ENCODE measurements at regions of chr5 and their contacts with region 1.

Region 1: DNA sequence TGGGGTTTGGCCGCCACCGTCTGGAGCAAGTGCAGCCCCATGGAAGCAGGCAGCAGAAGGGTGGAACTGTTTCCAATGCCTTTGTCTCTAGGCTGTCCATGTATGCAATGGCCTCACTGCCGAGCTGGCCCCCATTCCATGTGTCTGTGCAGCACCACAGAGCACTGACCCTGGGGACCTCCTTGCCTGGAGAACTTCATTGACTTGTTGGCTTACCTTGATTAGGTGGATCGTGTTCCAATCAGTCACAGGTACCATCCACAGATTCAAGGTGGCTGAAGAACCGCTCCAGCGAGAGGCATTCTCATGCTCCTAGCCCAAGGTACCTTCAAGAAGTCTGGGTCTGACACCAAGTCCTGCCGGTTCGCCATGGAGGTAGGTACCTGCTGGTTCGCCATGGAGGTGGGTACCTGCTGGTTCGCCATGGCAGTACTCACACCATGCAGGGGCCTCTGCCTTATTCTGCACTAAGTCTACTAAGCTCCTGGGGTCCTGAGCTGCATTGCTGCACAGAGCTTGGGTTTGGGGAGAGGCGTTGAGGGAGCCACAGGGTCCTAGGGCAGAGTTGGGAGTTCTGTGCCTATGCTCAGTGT is 358.3 kb upstream of the IRX1 start:
- DNase-seq: no peak
- ATAC-seq: no peak
- H3K4me3 ChIP-seq: no peak overlapping the region
- H3K27ac ChIP-seq: no peak overlapping the region
- H3K4me1 ChIP-seq: no peaks in the 10 kb centered on the region
- H3K27me3 ChIP-seq: no peaks in the 10 kb centered on the region
- CTCF ChIP-seq: no peak

Region 2: GRCh38 chr5:2399804-2400203 is 837.6 kb before region 1 on chr5:
- intact Hi-C with region 1: loop called in 1 of 10 experiments (anchors 5 kb)
- DNase-seq: no peak
- ATAC-seq: no peak
- H3K4me3 ChIP-seq: no peak overlapping the region
- H3K27ac ChIP-seq: no peak overlapping the region
- H3K4me1 ChIP-seq: no peaks in the 10 kb centered on the region
- H3K27me3 ChIP-seq: peaks cover 0 to 5% (median 0%) of the 10 kb centered on the region in 7 donors
- CTCF ChIP-seq: no peak

Measured in heart right ventricle (tissue), 16 donors.